ENCODE measurements at regions of chr22 and their contacts with region 1.

Region 1: DNA sequence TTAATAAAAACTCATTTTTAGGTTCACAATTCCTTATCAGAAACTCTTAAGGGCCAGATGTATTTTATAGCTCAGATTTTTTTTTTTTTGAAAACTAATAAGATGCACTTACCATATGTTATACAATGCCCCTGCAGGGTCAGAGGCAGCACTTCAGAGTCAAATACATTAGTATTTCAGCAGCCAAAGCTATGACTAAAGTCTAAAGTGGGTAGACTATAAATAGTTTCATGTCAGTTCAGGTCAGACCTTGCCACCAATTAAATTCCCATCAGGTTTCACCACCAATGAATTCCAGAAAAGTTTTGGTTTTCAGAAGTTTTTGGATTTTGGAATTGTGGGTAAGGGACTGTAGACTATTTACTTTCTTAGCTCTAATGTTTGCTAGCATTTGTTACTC is 75.9 kb downstream of the FAM83F start:
- DNase-seq: no peak
- ATAC-seq: no peak
- H3K4me3 ChIP-seq: no peak overlapping the region
- H3K4me3 Mint-ChIP-seq: peak overlapping the region; percentile 0
- H3K27ac ChIP-seq: no peak overlapping the region
- H3K27ac Mint-ChIP-seq: no peak overlapping the region
- H3K4me1 ChIP-seq: peaks cover 36% of the 10 kb centered on the region
- H3K4me1 Mint-ChIP-seq: peaks cover 83% of the 10 kb centered on the region
- H3K27me3 ChIP-seq: no peaks in the 10 kb centered on the region
- H3K27me3 Mint-ChIP-seq: no peaks in the 10 kb centered on the region
- CTCF ChIP-seq: no peak

Region 2: GRCh38 chr22:40107851-40108378 is 37.2 kb after region 1 on chr22:
- CTCF ChIA-PET with region 1: no interaction called
- POLR2A ChIA-PET with region 1: no interaction called
- intact Hi-C with region 1: loop called in 1 of 2 experiments (anchors 5 kb)
- DNase-seq: peak in 5 of 14 experiments; percentile 7 to 23 (median 21)
- ATAC-seq: peak; percentile 59
- H3K4me3 ChIP-seq: peak overlapping the region; percentile 44
- H3K4me3 Mint-ChIP-seq: peak overlapping the region; percentile 89
- H3K27ac ChIP-seq: peak overlapping the region; percentile 4 to 23
- H3K27ac Mint-ChIP-seq: peak overlapping the region; percentile 76
- H3K4me1 ChIP-seq: peaks cover 38% of the 10 kb centered on the region
- H3K4me1 Mint-ChIP-seq: peaks cover 92% of the 10 kb centered on the region
- H3K27me3 ChIP-seq: no peaks in the 10 kb centered on the region
- H3K27me3 Mint-ChIP-seq: no peaks in the 10 kb centered on the region
- CTCF ChIP-seq: no peak

Region 3: DNA sequence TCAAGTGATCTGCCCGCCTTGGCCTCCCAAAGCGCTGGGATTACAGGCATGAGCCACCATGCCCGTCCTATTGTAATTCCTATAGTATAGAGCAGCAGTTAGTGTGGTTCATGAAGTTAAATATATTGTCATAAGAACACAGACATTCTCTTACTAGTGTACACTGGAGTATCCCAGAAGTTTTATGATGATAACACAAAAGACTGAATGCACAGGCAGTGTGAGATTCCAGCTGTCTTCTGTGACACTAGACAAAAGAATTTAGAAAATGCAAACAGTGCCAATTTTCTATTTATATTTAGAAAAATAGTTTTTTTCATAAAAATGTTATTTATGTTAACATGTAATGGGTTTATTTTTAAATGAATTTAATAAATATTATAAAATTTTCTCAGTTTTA is 841.1 kb after region 1 on chr22:
- CTCF ChIA-PET with region 1: no interaction called
- POLR2A ChIA-PET with region 1: no interaction called
- intact Hi-C with region 1: no loop called
- DNase-seq: no peak
- ATAC-seq: no peak
- H3K4me3 ChIP-seq: no peak overlapping the region
- H3K4me3 Mint-ChIP-seq: no peak overlapping the region
- H3K27ac ChIP-seq: no peak overlapping the region
- H3K27ac Mint-ChIP-seq: no peak overlapping the region
- H3K4me1 ChIP-seq: no peaks in the 10 kb centered on the region
- H3K4me1 Mint-ChIP-seq: no peaks in the 10 kb centered on the region
- H3K27me3 ChIP-seq: no peaks in the 10 kb centered on the region
- H3K27me3 Mint-ChIP-seq: no peaks in the 10 kb centered on the region
- CTCF ChIP-seq: no peak

Measured in CD4-positive, alpha-beta T cell (primary cell).